ENCODE measurements at regions of chr10 and their contacts with region 1.

Region 1: DNA sequence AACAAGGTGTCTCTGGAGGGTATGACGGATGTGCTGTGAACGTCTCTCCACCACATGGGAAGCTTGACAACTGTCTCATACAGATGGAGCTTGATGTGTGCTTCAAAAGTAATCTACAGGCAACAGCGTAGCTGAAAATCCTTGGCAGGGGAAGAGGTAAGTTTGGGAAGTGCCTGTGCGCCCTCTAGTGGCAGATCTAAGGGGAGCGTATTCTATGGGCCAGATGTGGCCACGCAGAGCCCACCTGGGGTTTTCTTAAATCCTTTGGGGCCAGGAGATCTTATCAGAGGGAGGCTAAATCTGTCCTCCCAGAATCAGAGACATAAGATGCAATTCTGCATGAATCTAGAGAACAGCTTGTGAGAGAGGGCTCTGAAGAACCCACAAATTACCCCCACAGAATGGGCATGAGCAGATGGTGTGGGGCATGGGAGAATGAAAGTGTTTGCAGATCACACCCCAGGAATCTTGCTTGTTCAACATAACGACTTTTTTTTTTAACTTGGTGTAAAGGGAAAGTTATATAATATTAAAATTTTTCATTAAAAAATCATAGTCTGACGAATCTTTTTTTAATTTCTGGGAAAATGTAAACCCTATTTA is 91.2 kb upstream of the MPP7 start:
- DNase-seq: peak; percentile 45 to 85 (median 54)
- ATAC-seq: peak; percentile 80
- H3K4me3 ChIP-seq: no peak overlapping the region
- H3K4me3 Mint-ChIP-seq: no peak overlapping the region
- H3K27ac ChIP-seq: no peak overlapping the region
- H3K27ac Mint-ChIP-seq: no peak overlapping the region
- H3K4me1 ChIP-seq: peaks cover 5% of the 10 kb centered on the region
- H3K4me1 Mint-ChIP-seq: peaks cover 6% of the 10 kb centered on the region
- H3K27me3 ChIP-seq: no peaks in the 10 kb centered on the region
- H3K27me3 Mint-ChIP-seq: peaks cover 6% of the 10 kb centered on the region
- CTCF ChIP-seq: peak; percentile 91

Region 2: GRCh38 chr10:27661514-27662286 is 732.4 kb before region 1 on chr10:
- CTCF ChIA-PET with region 1: no interaction called
- POLR2A ChIA-PET with region 1: no interaction called
- intact Hi-C with region 1: loop called in 1 of 2 experiments (anchors 10 kb)
- DNase-seq: no peak
- ATAC-seq: no peak
- H3K4me3 ChIP-seq: no peak overlapping the region
- H3K4me3 Mint-ChIP-seq: no peak overlapping the region
- H3K27ac ChIP-seq: no peak overlapping the region
- H3K27ac Mint-ChIP-seq: no peak overlapping the region
- H3K4me1 ChIP-seq: no peaks in the 10 kb centered on the region
- H3K4me1 Mint-ChIP-seq: no peaks in the 10 kb centered on the region
- H3K27me3 ChIP-seq: peaks cover 3 to 24% of the 10 kb centered on the region in 2 experiments
- H3K27me3 Mint-ChIP-seq: peaks cover 45% of the 10 kb centered on the region
- CTCF ChIP-seq: no peak

Region 3: GRCh38 chr10:27783660-27784059 is 610.4 kb before region 1 on chr10:
- CTCF ChIA-PET with region 1: interaction called, 3 read pairs
- POLR2A ChIA-PET with region 1: no interaction called
- intact Hi-C with region 1: loop called in 1 of 2 experiments (anchors 5 kb)
- DNase-seq: peak in 5 of 14 experiments; percentile 9 to 57 (median 29)
- ATAC-seq: peak; percentile 44
- H3K4me3 ChIP-seq: no peak overlapping the region
- H3K4me3 Mint-ChIP-seq: no peak overlapping the region
- H3K27ac ChIP-seq: no peak overlapping the region
- H3K27ac Mint-ChIP-seq: no peak overlapping the region
- H3K4me1 ChIP-seq: no peaks in the 10 kb centered on the region
- H3K4me1 Mint-ChIP-seq: no peaks in the 10 kb centered on the region
- H3K27me3 ChIP-seq: peaks cover 0 to 3% of the 10 kb centered on the region in 2 experiments
- H3K27me3 Mint-ChIP-seq: peaks cover 42% of the 10 kb centered on the region
- CTCF ChIP-seq: no peak

Region 4: GRCh38 chr10:28201410-28202400 is 192.4 kb before region 1 on chr10:
- CTCF ChIA-PET with region 1: no interaction called
- POLR2A ChIA-PET with region 1: no interaction called
- intact Hi-C with region 1: no loop called
- DNase-seq: no peak
- ATAC-seq: no peak
- H3K4me3 ChIP-seq: no peak overlapping the region
- H3K4me3 Mint-ChIP-seq: no peak overlapping the region
- H3K27ac ChIP-seq: no peak overlapping the region
- H3K27ac Mint-ChIP-seq: no peak overlapping the region
- H3K4me1 ChIP-seq: no peaks in the 10 kb centered on the region
- H3K4me1 Mint-ChIP-seq: peaks cover 13% of the 10 kb centered on the region
- H3K27me3 ChIP-seq: no peaks in the 10 kb centered on the region
- H3K27me3 Mint-ChIP-seq: no peaks in the 10 kb centered on the region
- CTCF ChIP-seq: no peak